Tibial artery (tissue), 4 donors: ENCODE measurements at regions of chr20 and their contacts with region 1.

Region 1: DNA sequence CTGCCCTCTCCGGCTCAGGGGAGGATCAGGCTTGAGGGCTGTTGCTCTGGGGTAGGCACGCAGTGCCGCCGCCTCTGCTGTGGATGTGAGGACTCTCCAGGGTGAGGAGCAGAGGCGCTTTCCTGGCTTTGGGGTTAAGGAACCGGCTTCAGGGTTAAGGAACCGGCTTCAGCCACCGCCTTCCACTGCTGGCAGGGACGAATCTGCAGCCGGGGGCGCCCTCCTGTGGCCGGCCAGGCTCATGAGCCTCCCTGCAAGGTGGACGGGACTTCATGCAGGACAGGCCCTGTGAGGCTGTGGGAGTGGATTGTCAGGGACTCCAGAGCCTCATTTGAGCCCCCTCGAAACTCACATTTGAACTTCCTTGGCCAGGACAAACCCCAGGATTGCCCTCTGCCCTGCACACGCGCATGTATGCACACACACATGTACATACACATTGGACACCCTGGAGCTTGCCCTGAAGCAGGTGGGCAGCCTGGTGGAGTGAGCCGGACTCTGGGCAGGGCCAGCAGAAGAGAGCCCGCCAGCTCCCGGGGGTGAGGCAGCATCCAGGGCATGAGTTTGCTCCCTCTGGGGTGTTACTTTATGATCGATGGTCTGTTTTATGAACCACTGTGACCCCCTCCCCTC is 146.8 kb downstream of the PHACTR3 start:
- DNase-seq: peak; percentile 60 to 74
- H3K4me3 ChIP-seq: no peak overlapping the region
- H3K27ac ChIP-seq: no peak overlapping the region
- H3K4me1 ChIP-seq: peaks cover 0 to 40% (median 31%) of the 10 kb centered on the region in 4 donors
- H3K27me3 ChIP-seq: peaks cover 0 to 35% of the 10 kb centered on the region in 2 donors
- CTCF ChIP-seq: peak; percentile 59 to 67

Region 2: GRCh38 chr20:59530782-59531181 is 220.4 kb before region 1 on chr20:
- intact Hi-C with region 1: no loop called
- DNase-seq: no peak
- H3K4me3 ChIP-seq: no peak overlapping the region
- H3K27ac ChIP-seq: no peak overlapping the region
- H3K4me1 ChIP-seq: no peaks in the 10 kb centered on the region
- H3K27me3 ChIP-seq: peaks cover 0 to 23% of the 10 kb centered on the region in 2 donors
- CTCF ChIP-seq: no peak

Region 3: GRCh38 chr20:59571551-59572314 is 179.4 kb before region 1 on chr20:
- intact Hi-C with region 1: loop called (anchors 5 kb)
- DNase-seq: peak; percentile 37 to 75
- H3K4me3 ChIP-seq: peak overlapping the region; percentile 31 to 47
- H3K27ac ChIP-seq: no peak overlapping the region
- H3K4me1 ChIP-seq: peaks cover 0 to 6% (median 5%) of the 10 kb centered on the region in 4 donors
- H3K27me3 ChIP-seq: peaks cover 0 to 77% of the 10 kb centered on the region in 2 donors
- CTCF ChIP-seq: peak; percentile 82 to 96